ENCODE measurements at regions of chr4 and their contacts with region 1.

Region 1: GRCh38 chr4:154559494-154560418 is 3.1 kb upstream of the FGB start:
- DNase-seq: peak; percentile 24
- ATAC-seq: peak; percentile 80
- H3K4me3 ChIP-seq: no peak overlapping the region
- H3K27ac ChIP-seq: no peak overlapping the region
- H3K4me1 ChIP-seq: no peaks in the 10 kb centered on the region
- H3K27me3 ChIP-seq: no peaks in the 10 kb centered on the region
- CTCF ChIP-seq: peak; percentile 65

Region 2: GRCh38 chr4:154618708-154619315 is 59.1 kb after region 1 on chr4:
- CTCF ChIA-PET with region 1: interaction called, 10 read pairs
- POLR2A ChIA-PET with region 1: no interaction called
- in situ Hi-C with region 1: no loop called
- intact Hi-C with region 1: loop called (anchors 2 kb)
- DNase-seq: no peak
- ATAC-seq: peak; percentile 74; the same call in 1 of the 2 replicates
- H3K4me3 ChIP-seq: no peak overlapping the region
- H3K27ac ChIP-seq: no peak overlapping the region
- H3K4me1 ChIP-seq: no peaks in the 10 kb centered on the region
- H3K27me3 ChIP-seq: no peaks in the 10 kb centered on the region
- CTCF ChIP-seq: peak; percentile 79